ENCODE measurements at regions of chr2 and their contacts with region 1.

Region 1: GRCh38 chr2:218286570-218287459 is 5.5 kb downstream of the TMBIM1 start:
- DNase-seq: peak; percentile 90
- ATAC-seq: peak; percentile 77
- H3K4me3 Mint-ChIP-seq: peak overlapping the region; percentile 91
- H3K27ac Mint-ChIP-seq: peak overlapping the region; percentile 98
- H3K4me1 Mint-ChIP-seq: peaks cover 78% of the 10 kb centered on the region
- H3K27me3 Mint-ChIP-seq: no peaks in the 10 kb centered on the region

Region 2: GRCh38 chr2:218245214-218245613 is 41.6 kb before region 1 on chr2:
- CTCF ChIA-PET with region 1: no interaction called
- POLR2A ChIA-PET with region 1: no interaction called
- DNase-seq: no peak
- ATAC-seq: no peak
- H3K4me3 Mint-ChIP-seq: no peak overlapping the region
- H3K27ac Mint-ChIP-seq: peak overlapping the region; percentile 25
- H3K4me1 Mint-ChIP-seq: peaks cover 41% of the 10 kb centered on the region
- H3K27me3 Mint-ChIP-seq: no peaks in the 10 kb centered on the region

Region 3: GRCh38 chr2:218275371-218276072 is 11.3 kb before region 1 on chr2:
- CTCF ChIA-PET with region 1: interaction called, 158 read pairs
- POLR2A ChIA-PET with region 1: interaction called, 23 read pairs
- DNase-seq: no peak
- ATAC-seq: no peak
- H3K4me3 Mint-ChIP-seq: no peak overlapping the region
- H3K27ac Mint-ChIP-seq: no peak overlapping the region
- H3K4me1 Mint-ChIP-seq: peaks cover 27% of the 10 kb centered on the region
- H3K27me3 Mint-ChIP-seq: no peaks in the 10 kb centered on the region

Measured in activated CD8-positive, alpha-beta T cell treated with anti-CD3 and anti-CD28 coated beads, Interleukin-2, amount 10 ng/mL, durations not matched to agents 7 days and 5 days (primary cell).